Colonic mucosa (tissue), 4 donors: ENCODE measurements at regions of chr15 and their contacts with region 1.

Region 1: DNA sequence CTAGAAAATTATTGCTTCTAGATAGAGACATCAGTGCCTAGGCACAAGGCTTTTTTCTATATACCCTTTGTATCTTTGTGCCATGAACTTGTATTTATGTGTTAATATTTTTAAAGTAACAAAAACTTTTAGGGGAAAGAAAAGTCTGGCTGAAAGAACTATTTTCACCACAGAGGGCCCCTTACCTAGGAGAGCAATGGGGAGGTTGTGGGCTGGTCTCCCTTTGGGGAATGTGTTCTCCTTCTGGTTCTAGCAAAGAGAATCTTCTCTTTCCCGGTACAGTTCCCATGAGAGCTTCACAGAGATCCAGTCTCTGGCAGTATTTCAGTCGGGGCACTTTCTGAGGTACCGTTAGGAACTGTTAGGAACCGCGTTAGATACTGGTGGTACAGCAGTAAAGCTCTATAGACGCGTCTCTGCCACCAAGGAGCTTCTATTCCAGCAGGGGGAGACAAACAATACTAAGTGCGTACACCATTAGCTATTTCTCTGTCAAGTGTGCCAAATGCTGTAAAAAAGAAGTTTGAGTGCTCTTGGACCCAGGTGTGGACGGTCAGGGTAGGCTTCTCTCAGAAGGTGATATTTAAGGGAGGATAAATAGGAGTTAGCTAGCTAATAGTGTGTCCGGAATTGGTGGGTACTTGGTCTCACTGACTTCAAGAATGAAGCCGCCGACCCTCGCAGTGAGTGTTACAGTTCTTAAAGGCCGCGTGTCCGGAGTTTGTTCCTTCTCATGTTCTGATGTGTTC is 4.6 kb upstream of the EPB42 start:
- DNase-seq: peak; percentile 32
- H3K4me3 ChIP-seq: no peak overlapping the region
- H3K27ac ChIP-seq: no peak overlapping the region
- H3K4me1 ChIP-seq: no peaks in the 10 kb centered on the region
- H3K27me3 ChIP-seq: no peaks in the 10 kb centered on the region
- CTCF ChIP-seq: peak; percentile 62

Region 2: DNA sequence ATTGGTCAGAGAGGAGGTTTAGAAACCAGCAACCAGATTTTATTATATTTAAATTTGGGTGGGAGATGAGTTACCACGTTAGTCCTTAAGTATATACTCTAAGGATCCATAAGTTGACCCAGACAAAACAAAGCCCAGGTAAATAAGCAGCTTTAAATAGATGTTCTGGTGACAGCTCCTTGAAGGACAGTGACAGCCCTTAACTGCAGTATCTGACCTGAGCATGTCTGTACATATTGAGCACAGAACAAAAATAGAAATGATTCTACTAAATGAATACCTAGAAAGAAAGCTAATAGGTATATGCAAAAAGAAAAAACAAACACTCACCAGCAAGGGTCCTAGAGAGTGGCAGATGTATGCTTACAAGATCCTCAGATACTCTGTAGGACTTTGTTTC is 182.5 kb before region 1 on chr15:
- intact Hi-C with region 1: no loop called
- DNase-seq: no peak
- H3K4me3 ChIP-seq: no peak overlapping the region
- H3K27ac ChIP-seq: no peak overlapping the region
- H3K4me1 ChIP-seq: no peaks in the 10 kb centered on the region
- H3K27me3 ChIP-seq: no peaks in the 10 kb centered on the region
- CTCF ChIP-seq: no peak

Region 3: DNA sequence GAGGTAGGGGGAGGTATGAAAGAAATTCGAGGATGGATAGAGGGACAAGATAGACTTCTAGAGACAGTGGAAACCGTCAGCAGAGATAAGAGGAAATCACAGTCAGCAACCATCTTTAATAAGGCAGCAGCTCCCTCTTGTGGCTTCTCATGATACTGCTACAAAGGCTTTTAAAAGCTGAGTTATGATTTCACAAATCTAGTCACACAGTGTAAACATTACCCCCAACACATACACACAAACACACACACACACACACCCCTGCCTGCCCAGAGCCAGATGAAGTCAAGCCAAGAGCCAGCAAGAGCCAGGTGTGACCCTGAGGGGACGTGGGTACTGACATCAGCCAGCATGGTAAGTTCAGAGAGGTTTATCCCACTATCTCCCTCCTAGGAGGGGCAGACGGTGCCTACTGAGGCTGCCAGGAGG is 60.2 kb after region 1 on chr15:
- intact Hi-C with region 1: loop called (anchors 2 kb)
- DNase-seq: peak; percentile 45
- H3K4me3 ChIP-seq: no peak overlapping the region
- H3K27ac ChIP-seq: no peak overlapping the region
- H3K4me1 ChIP-seq: no peaks in the 10 kb centered on the region
- H3K27me3 ChIP-seq: no peaks in the 10 kb centered on the region
- CTCF ChIP-seq: peak; percentile 67

Region 4: GRCh38 chr15:43299411-43299810 is 74.0 kb after region 1 on chr15:
- intact Hi-C with region 1: no loop called
- DNase-seq: no peak
- H3K4me3 ChIP-seq: no peak overlapping the region
- H3K27ac ChIP-seq: no peak overlapping the region
- H3K4me1 ChIP-seq: no peaks in the 10 kb centered on the region
- H3K27me3 ChIP-seq: peaks cover 3% of the 10 kb centered on the region
- CTCF ChIP-seq: no peak